ENCODE measurements at regions of chr17 and their contacts with region 1.

Region 1: DNA sequence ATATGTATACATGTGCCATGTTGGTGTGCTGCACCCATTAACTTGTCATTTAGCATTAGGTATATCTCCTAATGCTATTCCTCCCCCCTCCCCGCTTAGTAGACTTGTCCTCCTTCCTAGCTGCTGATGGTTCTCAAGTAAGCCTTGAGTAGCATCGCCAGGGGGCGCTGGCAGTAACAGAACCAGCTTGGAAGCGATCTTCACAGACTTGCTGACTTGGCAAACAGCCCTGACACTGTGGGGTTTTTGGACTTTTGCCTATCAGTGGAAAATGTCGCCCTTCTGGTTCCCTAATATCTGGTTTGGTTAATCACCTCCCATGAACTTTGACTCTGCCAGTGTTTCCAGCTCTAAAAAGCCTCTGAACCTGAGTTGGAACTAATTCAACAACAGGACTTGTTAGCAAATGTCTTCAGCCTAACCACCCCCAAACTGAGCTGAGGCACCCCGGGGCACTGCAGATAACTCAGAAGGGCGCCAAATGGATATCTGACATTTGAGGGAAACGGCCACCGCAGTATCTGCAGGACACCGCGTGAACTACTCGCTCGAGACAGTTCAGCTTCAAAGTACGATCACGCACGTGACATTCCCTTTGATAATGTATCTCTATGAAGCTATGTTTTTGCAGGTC is 15.4 kb upstream of the SPATA32 start:
- DNase-seq: peak; percentile 91
- ATAC-seq: peak; percentile 94
- H3K4me3 ChIP-seq: no peak overlapping the region
- H3K4me3 Mint-ChIP-seq: no peak overlapping the region
- H3K27ac ChIP-seq: peak overlapping the region in 1 of 2 donors; percentile 48
- H3K27ac Mint-ChIP-seq: no peak overlapping the region
- H3K4me1 ChIP-seq: peaks cover 4 to 5% of the 10 kb centered on the region in 2 donors
- H3K4me1 Mint-ChIP-seq: peaks cover 6% of the 10 kb centered on the region
- H3K27me3 ChIP-seq: no peaks in the 10 kb centered on the region
- H3K27me3 Mint-ChIP-seq: no peaks in the 10 kb centered on the region
- CTCF ChIP-seq: peak; percentile 77

Region 2: DNA sequence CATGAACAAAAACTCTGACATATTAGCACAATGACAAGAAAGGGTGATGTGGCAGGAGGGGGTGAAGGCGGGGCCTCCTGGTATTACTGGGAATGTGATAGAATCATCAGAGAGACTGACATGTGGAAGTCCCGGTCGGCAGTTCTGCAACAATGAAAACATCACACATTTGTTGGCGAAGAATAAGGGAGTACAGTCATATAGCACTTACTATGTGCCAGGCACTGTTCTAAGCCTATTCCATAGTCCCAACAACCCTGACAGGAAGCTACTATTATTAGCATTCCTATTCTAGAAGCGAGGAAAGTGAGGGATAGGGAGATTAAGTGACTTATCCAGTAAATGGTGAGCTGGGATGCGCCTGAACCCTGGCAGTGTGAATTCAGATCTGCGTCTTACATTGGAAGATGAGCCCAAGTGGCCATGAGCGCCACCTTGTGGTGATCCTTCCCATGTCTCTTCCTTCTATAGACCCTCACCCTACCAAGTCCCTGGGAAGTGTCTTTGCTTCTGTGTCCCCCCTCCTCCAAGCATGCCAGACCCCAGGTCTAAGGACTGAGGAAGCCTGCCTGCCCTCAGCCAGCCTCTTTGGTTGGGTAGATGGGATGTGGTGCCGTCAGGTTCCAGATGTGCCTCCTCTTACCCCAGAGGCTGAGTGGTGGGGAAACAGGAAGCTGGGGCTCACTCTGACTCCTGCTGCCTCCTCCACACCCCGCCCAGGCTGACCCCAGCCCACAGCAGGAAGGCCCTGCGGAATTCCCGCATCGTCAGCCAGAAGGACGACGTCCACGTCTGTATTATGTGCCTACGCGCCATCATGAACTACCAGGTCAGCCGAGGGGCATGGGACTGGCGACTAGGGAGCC is 41.7 kb before region 1 on chr17:
- CTCF ChIA-PET with region 1: interaction called, 6 read pairs
- POLR2A ChIA-PET with region 1: no interaction called
- intact Hi-C with region 1: loop called (anchors 1 kb)
- DNase-seq: peak; percentile 87
- ATAC-seq: peak; percentile 56
- H3K4me3 ChIP-seq: no peak overlapping the region
- H3K4me3 Mint-ChIP-seq: no peak overlapping the region
- H3K27ac ChIP-seq: peak overlapping the region; percentile 0 to 43
- H3K27ac Mint-ChIP-seq: peak overlapping the region; percentile 82
- H3K4me1 ChIP-seq: peaks cover 18 to 45% of the 10 kb centered on the region in 2 donors
- H3K4me1 Mint-ChIP-seq: peaks cover 47% of the 10 kb centered on the region
- H3K27me3 ChIP-seq: no peaks in the 10 kb centered on the region
- H3K27me3 Mint-ChIP-seq: no peaks in the 10 kb centered on the region
- CTCF ChIP-seq: peak; percentile 83

Region 3: DNA sequence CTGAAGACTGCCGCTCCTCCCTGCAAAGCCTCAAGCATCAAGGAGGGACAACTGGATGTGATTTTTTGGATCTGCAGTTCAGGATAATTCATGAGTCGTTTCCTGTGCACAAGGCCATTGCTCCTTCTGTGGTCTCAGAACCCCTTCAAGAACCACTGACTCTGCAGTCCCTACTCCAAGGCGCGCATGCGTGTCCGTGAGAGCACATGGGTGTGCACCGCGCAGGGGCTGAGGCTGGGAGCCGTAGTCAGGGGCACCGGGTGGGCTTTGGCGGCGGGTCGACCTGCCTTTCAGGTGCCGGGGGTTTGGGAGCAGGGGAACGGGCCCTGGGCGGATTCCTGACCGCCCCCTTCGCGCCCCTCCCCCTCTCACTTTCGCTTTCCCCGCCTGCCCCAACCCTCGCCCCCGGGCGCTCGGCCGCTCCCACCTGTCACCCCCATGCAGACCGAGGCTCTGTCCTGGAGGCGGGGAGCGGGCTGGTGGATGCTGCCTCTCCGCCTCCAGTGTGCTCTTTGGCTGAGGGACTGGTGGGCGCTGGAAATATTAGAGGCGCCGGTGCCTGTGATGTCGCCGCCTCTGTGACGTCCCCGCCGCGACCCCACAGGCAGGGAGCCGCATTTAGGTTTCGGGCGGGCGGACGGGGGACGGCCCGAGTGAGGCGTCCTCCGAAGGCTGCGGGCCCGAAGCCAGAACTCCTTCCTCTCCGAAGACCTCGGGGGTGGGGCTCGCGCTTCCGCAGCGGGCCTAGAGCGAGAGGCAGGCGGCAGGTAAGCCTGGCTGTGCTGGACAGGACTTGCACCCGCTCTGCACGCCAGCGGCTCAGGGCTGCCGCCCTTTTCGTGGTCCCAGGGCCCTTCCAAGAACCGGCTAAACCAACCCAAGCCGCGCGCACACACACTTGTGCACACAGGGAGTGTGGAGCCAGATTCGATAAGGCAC is 15.5 kb before region 1 on chr17 and contains the start of gene SPATA32:
- CTCF ChIA-PET with region 1: interaction called, 22 read pairs
- POLR2A ChIA-PET with region 1: no interaction called
- intact Hi-C with region 1: no loop called
- DNase-seq: peak; percentile 68
- ATAC-seq: peak; percentile 71
- H3K4me3 ChIP-seq: peak within 1 kb of the TSS; percentile 19 to 81 (median 73)
- H3K4me3 Mint-ChIP-seq: peak within 1 kb of the TSS; percentile 87
- H3K27ac ChIP-seq: peak within 1 kb of the TSS; percentile 51 to 62
- H3K27ac Mint-ChIP-seq: peak within 1 kb of the TSS; percentile 78
- H3K4me1 ChIP-seq: peaks cover 5 to 18% of the 10 kb centered on the region in 2 donors
- H3K4me1 Mint-ChIP-seq: peaks cover 16% of the 10 kb centered on the region
- H3K27me3 ChIP-seq: no peaks in the 10 kb centered on the region
- H3K27me3 Mint-ChIP-seq: no peaks in the 10 kb centered on the region
- CTCF ChIP-seq: no peak
- total RNA-seq, gene SPATA32: 0.27 and 0.52 TPM in 2 replicates

Region 4: GRCh38 chr17:45317112-45317928 is 40.0 kb after region 1 on chr17:
- CTCF ChIA-PET with region 1: interaction called, 207 read pairs
- POLR2A ChIA-PET with region 1: interaction called, 18 read pairs
- intact Hi-C with region 1: loop called (anchors 1 kb)
- DNase-seq: peak; percentile 100
- ATAC-seq: peak; percentile 80
- H3K4me3 ChIP-seq: peak overlapping the region; percentile 32 to 90 (median 62)
- H3K4me3 Mint-ChIP-seq: peak overlapping the region; percentile 92
- H3K27ac ChIP-seq: peak overlapping the region; percentile 47 to 93
- H3K27ac Mint-ChIP-seq: peak overlapping the region; percentile 95
- H3K4me1 ChIP-seq: peaks cover 39 to 41% of the 10 kb centered on the region in 2 donors
- H3K4me1 Mint-ChIP-seq: peaks cover 48% of the 10 kb centered on the region
- H3K27me3 ChIP-seq: no peaks in the 10 kb centered on the region
- H3K27me3 Mint-ChIP-seq: no peaks in the 10 kb centered on the region
- CTCF ChIP-seq: no peak

Region 5: DNA sequence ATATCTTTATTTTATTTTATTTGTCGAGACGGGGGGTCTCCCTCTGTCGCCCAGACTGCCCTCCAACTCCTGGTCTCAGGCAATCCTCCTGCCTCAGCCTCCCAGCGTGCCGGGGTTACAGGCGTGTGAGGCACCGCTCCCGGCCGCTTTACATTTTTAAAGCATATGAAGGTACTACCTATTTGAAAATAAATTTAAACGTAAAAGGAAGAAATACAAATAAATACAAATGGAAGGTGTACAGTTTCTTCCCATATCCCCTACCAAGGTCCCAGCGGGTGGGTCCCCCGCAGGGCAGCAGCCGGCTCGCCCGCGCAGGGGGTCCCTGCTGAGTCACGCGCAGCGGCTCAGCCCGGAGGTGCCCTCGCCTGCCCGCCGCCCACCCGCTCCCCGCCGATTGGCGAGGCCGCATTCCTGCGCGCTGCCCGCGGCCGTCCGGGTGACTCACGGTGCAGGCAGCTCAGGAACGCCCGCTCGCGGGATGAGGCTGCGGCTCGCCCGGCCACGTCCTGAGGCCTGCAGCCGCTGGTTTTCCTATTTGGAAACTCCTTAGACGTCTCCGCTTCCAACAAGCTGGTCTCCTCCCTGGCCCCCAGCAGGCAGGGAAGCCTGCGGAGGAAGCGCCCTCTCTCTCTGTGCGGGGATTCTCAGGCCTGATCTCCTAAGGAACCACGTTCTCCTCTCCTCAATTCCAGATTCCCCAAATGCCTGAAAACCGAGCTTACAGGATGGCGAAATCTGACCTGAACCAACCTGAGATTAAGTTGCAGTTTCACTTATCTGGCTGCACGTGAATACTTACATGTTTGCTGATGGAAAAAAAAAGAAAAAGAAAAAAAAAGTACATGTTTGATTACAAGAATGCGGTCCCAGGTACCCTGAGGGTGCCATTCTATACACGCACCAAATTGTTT is 94.3 kb after region 1 on chr17:
- CTCF ChIA-PET with region 1: interaction called, 29 read pairs
- POLR2A ChIA-PET with region 1: no interaction called
- intact Hi-C with region 1: no loop called
- DNase-seq: peak; percentile 22
- ATAC-seq: peak; percentile 31
- H3K4me3 ChIP-seq: peak overlapping the region in 3 of 5 experiments; percentile 11 to 25 (median 24)
- H3K4me3 Mint-ChIP-seq: peak overlapping the region; percentile 70
- H3K27ac ChIP-seq: no peak overlapping the region
- H3K27ac Mint-ChIP-seq: no peak overlapping the region
- H3K4me1 ChIP-seq: peaks cover 6 to 22% of the 10 kb centered on the region in 2 donors
- H3K4me1 Mint-ChIP-seq: peaks cover 19% of the 10 kb centered on the region
- H3K27me3 ChIP-seq: peaks cover 0 to 23% (median 8%) of the 10 kb centered on the region in 4 experiments
- H3K27me3 Mint-ChIP-seq: peaks cover 21% of the 10 kb centered on the region
- CTCF ChIP-seq: no peak